ENCODE measurements at regions of chr21 and their contacts with region 1.

Region 1: DNA sequence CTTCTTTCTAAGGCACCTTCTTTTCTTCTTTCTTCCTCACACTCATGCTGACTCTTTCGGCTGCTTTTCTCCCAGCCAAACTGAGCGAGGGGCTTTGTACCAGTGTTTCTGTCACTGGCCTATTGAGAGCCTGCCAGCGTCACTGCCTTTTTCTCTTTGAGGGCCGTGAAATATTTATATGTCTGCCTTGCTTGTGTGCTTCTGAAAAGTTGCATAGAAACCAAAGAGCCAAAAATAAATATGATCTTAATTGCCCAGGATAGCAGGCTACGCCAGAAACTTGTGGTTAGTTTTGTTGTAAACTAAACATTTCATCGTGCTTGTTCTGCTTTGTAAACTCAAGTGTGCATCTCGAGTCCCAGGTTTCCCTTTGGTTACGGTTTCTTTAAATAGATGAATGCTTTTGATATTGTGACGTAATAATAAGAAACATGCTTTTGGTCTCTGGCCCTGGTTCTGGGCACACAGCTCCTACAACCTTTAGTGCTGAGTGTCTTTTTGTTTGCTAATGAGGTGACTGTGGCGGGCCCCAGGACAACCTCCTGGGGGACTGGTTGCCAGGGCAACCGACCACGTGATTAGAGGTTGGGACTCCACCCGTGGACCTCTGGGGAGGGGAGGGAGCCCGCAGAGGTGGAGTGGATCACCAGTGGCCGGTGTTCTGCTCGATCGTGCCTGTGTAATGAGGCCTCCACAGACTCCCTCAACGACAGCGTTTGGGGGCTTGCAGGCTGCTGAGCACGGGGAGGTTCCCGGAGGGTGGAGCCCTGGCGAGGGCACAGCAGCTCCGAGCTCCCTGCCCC is 10.9 kb downstream of the SLC37A1 start:
- DNase-seq: peak; percentile 29 to 83 (median 67)
- ATAC-seq: peak; percentile 41
- H3K4me3 ChIP-seq: peak overlapping the region in 1 of 2 experiments; percentile 14
- H3K4me3 Mint-ChIP-seq: peak overlapping the region; percentile 52
- H3K27ac ChIP-seq: peak overlapping the region; percentile 17 to 57
- H3K27ac Mint-ChIP-seq: peak overlapping the region; percentile 81
- H3K4me1 ChIP-seq: peaks cover 48% of the 10 kb centered on the region
- H3K4me1 Mint-ChIP-seq: peaks cover 48% of the 10 kb centered on the region
- H3K27me3 ChIP-seq: no peaks in the 10 kb centered on the region
- H3K27me3 Mint-ChIP-seq: no peaks in the 10 kb centered on the region
- CTCF ChIP-seq: no peak

Region 2: DNA sequence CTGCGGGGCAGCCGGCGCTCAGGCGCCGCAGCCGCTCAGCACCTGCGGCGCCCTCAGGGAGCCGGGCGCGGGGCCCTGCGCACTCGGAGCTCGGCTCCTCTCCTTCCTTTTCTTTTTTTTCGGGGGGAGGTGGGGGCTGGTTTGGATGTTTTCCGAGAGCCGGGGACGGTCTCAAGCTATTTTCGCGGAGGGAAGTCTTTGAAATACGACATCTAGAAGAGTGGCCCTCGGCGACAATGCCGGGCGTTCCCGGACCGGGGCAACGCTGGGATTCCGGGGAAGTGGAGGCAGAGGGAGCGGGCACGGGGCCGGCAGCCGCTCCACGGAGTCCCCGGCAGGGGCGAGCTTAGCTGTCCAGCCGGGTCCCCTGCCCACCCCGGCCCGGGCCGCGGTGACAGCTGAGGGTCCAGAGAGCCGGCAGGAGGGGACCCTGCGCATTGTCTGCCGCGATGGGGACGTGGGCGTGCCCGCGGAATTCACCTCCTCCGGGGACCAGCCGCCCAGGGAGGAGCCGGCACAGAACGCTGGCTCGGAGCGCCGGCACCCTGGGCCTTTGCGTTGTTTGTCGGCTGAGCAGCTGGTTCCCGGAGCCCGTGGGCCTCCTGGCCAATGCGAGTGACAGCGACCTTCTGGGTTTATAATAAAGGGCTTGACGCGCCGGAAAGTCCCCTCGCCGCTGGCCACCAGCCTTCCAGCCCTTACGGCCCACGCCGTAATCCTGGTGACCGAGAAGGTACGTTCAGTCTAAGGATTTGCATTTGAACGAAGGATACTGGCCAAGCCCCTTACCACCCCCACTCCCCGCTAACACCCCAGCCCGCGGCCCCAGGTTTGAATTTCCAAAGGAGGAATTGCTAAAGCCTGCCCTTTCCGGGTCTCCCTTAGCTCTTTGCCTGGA is 10.3 kb before region 1 on chr21:
- CTCF ChIA-PET with region 1: interaction called, 7 read pairs
- POLR2A ChIA-PET with region 1: interaction called, 24 read pairs
- intact Hi-C with region 1: loop called in 1 of 2 experiments (anchors 1 kb)
- DNase-seq: peak in 8 of 9 experiments; percentile 35 to 78 (median 66)
- ATAC-seq: peak; percentile 85
- H3K4me3 ChIP-seq: peak overlapping the region; percentile 75 to 78
- H3K4me3 Mint-ChIP-seq: peak overlapping the region; percentile 80
- H3K27ac ChIP-seq: peak overlapping the region; percentile 64 to 76
- H3K27ac Mint-ChIP-seq: peak overlapping the region; percentile 82
- H3K4me1 ChIP-seq: peaks cover 18% of the 10 kb centered on the region
- H3K4me1 Mint-ChIP-seq: peaks cover 42% of the 10 kb centered on the region
- H3K27me3 ChIP-seq: no peaks in the 10 kb centered on the region
- H3K27me3 Mint-ChIP-seq: no peaks in the 10 kb centered on the region
- CTCF ChIP-seq: no peak

Region 3: DNA sequence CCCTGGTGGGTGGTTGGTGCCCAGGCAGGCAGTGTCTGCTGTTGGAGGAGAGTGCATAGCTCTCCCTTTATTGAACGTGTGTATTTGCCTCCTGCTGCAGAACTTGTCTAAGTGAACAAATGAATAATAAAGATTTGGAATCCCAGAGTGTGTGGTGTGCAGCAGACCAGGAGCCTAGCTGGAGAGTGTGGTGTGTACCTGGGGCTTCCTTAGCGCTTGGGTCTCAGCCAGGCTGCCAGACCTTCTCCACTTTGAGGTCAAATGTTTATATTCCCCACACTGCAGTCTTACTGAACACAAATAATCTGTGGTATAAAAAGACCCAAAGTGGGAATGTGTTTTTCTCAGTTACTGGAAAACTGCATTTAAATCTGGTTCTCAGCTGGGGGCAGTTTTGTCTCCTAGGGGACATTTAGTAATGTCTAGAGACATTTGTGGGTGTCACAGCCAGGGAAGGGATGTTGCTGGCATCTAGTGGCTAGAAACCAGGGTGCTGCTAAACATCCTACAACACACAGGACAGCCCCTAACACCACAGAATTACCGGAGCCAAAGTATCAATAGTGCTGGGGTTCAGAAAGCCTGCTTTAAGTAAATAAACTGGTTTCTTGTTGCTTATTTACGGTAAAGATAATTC is 12.7 kb after region 1 on chr21:
- CTCF ChIA-PET with region 1: interaction called, 21 read pairs
- POLR2A ChIA-PET with region 1: interaction called, 4 read pairs
- intact Hi-C with region 1: no loop called
- DNase-seq: peak in 2 of 9 experiments; percentile 43 to 53
- ATAC-seq: peak; percentile 66
- H3K4me3 ChIP-seq: no peak overlapping the region
- H3K4me3 Mint-ChIP-seq: no peak overlapping the region
- H3K27ac ChIP-seq: no peak overlapping the region
- H3K27ac Mint-ChIP-seq: no peak overlapping the region
- H3K4me1 ChIP-seq: peaks cover 6% of the 10 kb centered on the region
- H3K4me1 Mint-ChIP-seq: peaks cover 22% of the 10 kb centered on the region
- H3K27me3 ChIP-seq: no peaks in the 10 kb centered on the region
- H3K27me3 Mint-ChIP-seq: no peaks in the 10 kb centered on the region
- CTCF ChIP-seq: no peak

Region 4: GRCh38 chr21:42695697-42696380 is 171.3 kb after region 1 on chr21:
- CTCF ChIA-PET with region 1: no interaction called
- POLR2A ChIA-PET with region 1: no interaction called
- intact Hi-C with region 1: no loop called
- DNase-seq: no peak
- ATAC-seq: no peak
- H3K4me3 ChIP-seq: no peak overlapping the region
- H3K4me3 Mint-ChIP-seq: no peak overlapping the region
- H3K27ac ChIP-seq: no peak overlapping the region
- H3K27ac Mint-ChIP-seq: no peak overlapping the region
- H3K4me1 ChIP-seq: no peaks in the 10 kb centered on the region
- H3K4me1 Mint-ChIP-seq: no peaks in the 10 kb centered on the region
- H3K27me3 ChIP-seq: no peaks in the 10 kb centered on the region
- H3K27me3 Mint-ChIP-seq: no peaks in the 10 kb centered on the region
- CTCF ChIP-seq: no peak